CD8-positive, alpha-beta T cell (primary cell): ENCODE measurements at regions of chr3 and their contacts with region 1.

Region 1: GRCh38 chr3:8324740-8325139 is 176.9 kb upstream of the LMCD1 start:
- DNase-seq: peak; percentile 22 to 74 (median 60)
- ATAC-seq: peak; percentile 67
- H3K4me3 ChIP-seq: no peak overlapping the region
- H3K4me3 Mint-ChIP-seq: no peak overlapping the region
- H3K27ac ChIP-seq: no peak overlapping the region
- H3K27ac Mint-ChIP-seq: no peak overlapping the region
- H3K4me1 ChIP-seq: peaks cover 7% of the 10 kb centered on the region
- H3K4me1 Mint-ChIP-seq: peaks cover 30% of the 10 kb centered on the region
- H3K27me3 ChIP-seq: no peaks in the 10 kb centered on the region
- H3K27me3 Mint-ChIP-seq: peaks cover 2% of the 10 kb centered on the region
- CTCF ChIP-seq: peak; percentile 67

Region 2: DNA sequence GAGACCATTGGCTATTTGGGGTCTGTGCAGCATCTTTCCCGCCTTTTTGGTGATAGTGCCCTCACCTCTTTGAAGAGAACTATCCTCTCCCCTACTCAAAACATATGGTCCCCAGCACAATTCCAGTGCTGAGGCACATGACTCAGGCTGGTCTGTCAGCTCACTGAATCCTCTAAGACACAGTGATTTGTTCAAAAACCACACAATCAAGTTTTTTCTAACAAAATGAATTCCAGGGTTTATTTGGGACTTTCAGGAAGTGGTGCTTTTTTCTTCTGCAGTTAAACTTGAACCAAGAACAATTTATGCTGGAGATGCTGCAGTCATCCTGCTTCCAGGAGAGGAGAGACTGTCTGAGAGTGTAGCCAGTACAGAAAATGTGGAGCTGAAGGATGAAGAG is 34.4 kb after region 1 on chr3:
- CTCF ChIA-PET with region 1: interaction called, 6 read pairs
- POLR2A ChIA-PET with region 1: interaction called, 3 read pairs
- intact Hi-C with region 1: loop called (anchors 2 to 5 kb)
- DNase-seq: no peak
- ATAC-seq: no peak
- H3K4me3 ChIP-seq: no peak overlapping the region
- H3K4me3 Mint-ChIP-seq: no peak overlapping the region
- H3K27ac ChIP-seq: no peak overlapping the region
- H3K27ac Mint-ChIP-seq: peak overlapping the region; percentile 38
- H3K4me1 ChIP-seq: peaks cover 44% of the 10 kb centered on the region
- H3K4me1 Mint-ChIP-seq: peaks cover 68% of the 10 kb centered on the region
- H3K27me3 ChIP-seq: no peaks in the 10 kb centered on the region
- H3K27me3 Mint-ChIP-seq: no peaks in the 10 kb centered on the region
- CTCF ChIP-seq: no peak

Region 3: GRCh38 chr3:8416965-8417364 is 92.2 kb after region 1 on chr3:
- CTCF ChIA-PET with region 1: interaction called, 222 read pairs
- POLR2A ChIA-PET with region 1: interaction called, 5 read pairs
- intact Hi-C with region 1: loop called (anchors 1 kb)
- DNase-seq: peak in 3 of 9 experiments; percentile 4 to 8 (median 8)
- ATAC-seq: no peak
- H3K4me3 ChIP-seq: no peak overlapping the region
- H3K4me3 Mint-ChIP-seq: no peak overlapping the region
- H3K27ac ChIP-seq: no peak overlapping the region
- H3K27ac Mint-ChIP-seq: no peak overlapping the region
- H3K4me1 ChIP-seq: peaks cover 5% of the 10 kb centered on the region
- H3K4me1 Mint-ChIP-seq: peaks cover 8% of the 10 kb centered on the region
- H3K27me3 ChIP-seq: no peaks in the 10 kb centered on the region
- H3K27me3 Mint-ChIP-seq: no peaks in the 10 kb centered on the region
- CTCF ChIP-seq: no peak

Region 4: GRCh38 chr3:8490079-8490552 is 165.4 kb after region 1 on chr3:
- CTCF ChIA-PET with region 1: no interaction called
- POLR2A ChIA-PET with region 1: no interaction called
- intact Hi-C with region 1: loop called in 1 of 2 experiments (anchors 10 kb)
- DNase-seq: no peak
- ATAC-seq: no peak
- H3K4me3 ChIP-seq: no peak overlapping the region
- H3K4me3 Mint-ChIP-seq: no peak overlapping the region
- H3K27ac ChIP-seq: no peak overlapping the region
- H3K27ac Mint-ChIP-seq: no peak overlapping the region
- H3K4me1 ChIP-seq: no peaks in the 10 kb centered on the region
- H3K4me1 Mint-ChIP-seq: no peaks in the 10 kb centered on the region
- H3K27me3 ChIP-seq: no peaks in the 10 kb centered on the region
- H3K27me3 Mint-ChIP-seq: peaks cover 12% of the 10 kb centered on the region
- CTCF ChIP-seq: no peak

Region 5: GRCh38 chr3:8576841-8577571 is 252.3 kb after region 1 on chr3:
- CTCF ChIA-PET with region 1: no interaction called
- POLR2A ChIA-PET with region 1: no interaction called
- intact Hi-C with region 1: no loop called
- DNase-seq: no peak
- ATAC-seq: no peak
- H3K4me3 ChIP-seq: no peak overlapping the region
- H3K4me3 Mint-ChIP-seq: no peak overlapping the region
- H3K27ac ChIP-seq: no peak overlapping the region
- H3K27ac Mint-ChIP-seq: no peak overlapping the region
- H3K4me1 ChIP-seq: no peaks in the 10 kb centered on the region
- H3K4me1 Mint-ChIP-seq: no peaks in the 10 kb centered on the region
- H3K27me3 ChIP-seq: no peaks in the 10 kb centered on the region
- H3K27me3 Mint-ChIP-seq: no peaks in the 10 kb centered on the region
- CTCF ChIP-seq: no peak